Panc1 (cell line): ENCODE measurements at regions of chr10 and their contacts with region 1.

Region 1: GRCh38 chr10:74093530-74094164 is 57.0 kb downstream of the AP3M1 start:
- DNase-seq: no peak
- ATAC-seq: no peak
- H3K4me3 ChIP-seq: no peak overlapping the region
- H3K27ac ChIP-seq: no peak overlapping the region
- H3K4me1 ChIP-seq: no peaks in the 10 kb centered on the region
- H3K27me3 ChIP-seq: no peaks in the 10 kb centered on the region
- CTCF ChIP-seq: no peak

Region 2: DNA sequence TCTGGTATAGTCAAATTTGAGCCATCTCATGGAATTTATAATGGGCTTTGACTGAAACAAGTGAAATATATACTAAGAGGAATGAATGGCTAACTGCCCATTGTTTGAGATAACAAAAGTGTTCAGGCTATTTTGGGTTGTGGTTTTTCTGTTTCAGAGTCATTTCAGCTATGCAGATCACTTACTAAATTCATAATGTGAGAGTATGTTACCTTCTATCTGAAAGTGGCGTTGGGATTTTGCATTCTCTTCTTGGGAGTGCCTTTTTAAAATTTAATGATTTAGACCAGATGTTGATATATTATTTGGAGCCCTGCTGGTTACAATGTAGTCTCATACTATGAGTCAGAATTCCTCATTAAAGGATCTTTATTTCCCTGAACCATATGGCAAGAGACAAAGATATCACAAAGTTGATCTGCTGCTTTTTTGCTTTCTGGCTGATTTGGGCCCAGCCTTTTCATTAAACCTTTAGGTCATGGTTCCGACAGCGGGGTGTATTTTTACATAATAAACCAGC is 85.4 kb before region 1 on chr10:
- CTCF ChIA-PET with region 1: no interaction called
- POLR2A ChIA-PET with region 1: interaction called, 14 read pairs
- in situ Hi-C with region 1: no loop called
- intact Hi-C with region 1: no loop called
- DNase-seq: no peak
- ATAC-seq: no peak
- H3K4me3 ChIP-seq: no peak overlapping the region
- H3K27ac ChIP-seq: peak overlapping the region; percentile 70
- H3K4me1 ChIP-seq: peaks cover 83% of the 10 kb centered on the region
- H3K27me3 ChIP-seq: no peaks in the 10 kb centered on the region
- CTCF ChIP-seq: no peak

Region 3: GRCh38 chr10:74047868-74048267 is 45.8 kb before region 1 on chr10:
- CTCF ChIA-PET with region 1: no interaction called
- POLR2A ChIA-PET with region 1: no interaction called
- in situ Hi-C with region 1: no loop called
- intact Hi-C with region 1: no loop called
- DNase-seq: no peak
- ATAC-seq: no peak
- H3K4me3 ChIP-seq: no peak overlapping the region
- H3K27ac ChIP-seq: no peak overlapping the region
- H3K4me1 ChIP-seq: peaks cover 31% of the 10 kb centered on the region
- H3K27me3 ChIP-seq: no peaks in the 10 kb centered on the region
- CTCF ChIP-seq: no peak